OCI-LY7 (cell line): ENCODE measurements at regions of chr18 and their contacts with region 1.

Region 1: GRCh38 chr18:5029592-5029991 is 167.5 kb downstream of the AKAIN1 start:
- DNase-seq: no peak
- H3K4me3 ChIP-seq: no peak overlapping the region
- H3K27ac ChIP-seq: no peak overlapping the region
- H3K4me1 ChIP-seq: no peaks in the 10 kb centered on the region
- CTCF ChIP-seq: no peak

Region 2: DNA sequence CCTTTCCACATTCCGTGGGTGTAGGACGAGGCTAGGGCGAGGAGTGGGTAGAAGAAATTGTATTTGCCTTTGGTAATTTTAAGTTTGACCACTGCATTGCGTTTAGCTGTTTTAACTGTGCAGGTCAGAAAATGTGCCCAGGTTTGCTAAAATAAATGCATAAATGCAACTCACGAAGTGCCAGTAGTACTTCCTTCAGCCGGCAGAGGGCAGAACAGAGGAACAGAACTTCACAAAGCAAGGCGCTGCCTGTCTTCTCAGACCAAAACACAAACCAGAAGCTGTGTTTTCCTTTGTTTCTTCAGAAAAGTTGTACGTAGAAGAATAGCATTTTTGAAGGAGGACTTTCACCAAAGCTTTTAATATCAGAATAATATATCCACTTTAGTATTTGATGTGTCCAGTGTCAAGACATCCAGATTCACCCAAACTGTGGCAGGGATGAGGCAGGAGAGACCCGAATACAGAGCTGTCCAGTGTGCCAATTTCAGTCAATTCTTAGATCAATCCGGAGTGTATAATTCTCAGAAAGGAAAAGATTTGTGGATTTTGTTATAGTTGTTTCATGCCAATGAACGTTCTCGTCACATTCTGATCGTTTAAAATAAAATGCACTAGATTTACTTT is 923.1 kb before region 1 on chr18:
- CTCF ChIA-PET with region 1: no interaction called
- POLR2A ChIA-PET with region 1: no interaction called
- intact Hi-C with region 1: loop called (anchors 10 kb)
- DNase-seq: peak; percentile 70
- H3K4me3 ChIP-seq: no peak overlapping the region
- H3K27ac ChIP-seq: no peak overlapping the region
- H3K4me1 ChIP-seq: no peaks in the 10 kb centered on the region
- CTCF ChIP-seq: peak; percentile 97

Region 3: DNA sequence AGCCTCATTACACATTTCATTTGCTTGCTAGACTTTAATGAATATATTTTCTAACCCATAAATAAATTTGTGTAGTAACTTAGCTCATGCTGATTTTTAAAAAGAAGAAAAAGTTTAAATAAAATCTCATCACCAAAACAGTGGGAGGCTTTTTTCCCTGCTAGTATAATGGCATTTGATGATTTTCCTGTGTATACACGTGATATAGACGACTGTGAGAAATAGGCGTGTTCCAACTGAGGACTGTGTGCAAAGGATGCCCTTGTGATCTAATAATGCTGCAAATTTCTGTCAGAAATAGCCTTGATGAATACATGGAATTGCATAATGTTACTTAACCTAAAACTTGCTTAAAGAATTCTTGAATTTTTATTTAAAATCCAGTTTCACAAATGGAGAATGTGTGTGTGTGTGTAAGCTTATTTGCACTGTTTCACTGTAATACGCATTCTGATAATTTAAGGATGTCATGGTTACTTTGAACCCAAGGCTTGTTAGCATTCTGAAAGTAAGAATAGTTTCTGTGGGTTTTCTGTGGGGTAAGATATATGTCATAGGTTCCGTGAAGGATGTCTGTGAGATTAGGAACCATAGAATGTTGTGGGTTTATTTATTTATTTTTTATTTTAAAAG is 752.5 kb before region 1 on chr18:
- CTCF ChIA-PET with region 1: no interaction called
- POLR2A ChIA-PET with region 1: no interaction called
- intact Hi-C with region 1: loop called (anchors 10 kb)
- DNase-seq: no peak
- H3K4me3 ChIP-seq: no peak overlapping the region
- H3K27ac ChIP-seq: no peak overlapping the region
- H3K4me1 ChIP-seq: no peaks in the 10 kb centered on the region
- CTCF ChIP-seq: no peak

Region 4: DNA sequence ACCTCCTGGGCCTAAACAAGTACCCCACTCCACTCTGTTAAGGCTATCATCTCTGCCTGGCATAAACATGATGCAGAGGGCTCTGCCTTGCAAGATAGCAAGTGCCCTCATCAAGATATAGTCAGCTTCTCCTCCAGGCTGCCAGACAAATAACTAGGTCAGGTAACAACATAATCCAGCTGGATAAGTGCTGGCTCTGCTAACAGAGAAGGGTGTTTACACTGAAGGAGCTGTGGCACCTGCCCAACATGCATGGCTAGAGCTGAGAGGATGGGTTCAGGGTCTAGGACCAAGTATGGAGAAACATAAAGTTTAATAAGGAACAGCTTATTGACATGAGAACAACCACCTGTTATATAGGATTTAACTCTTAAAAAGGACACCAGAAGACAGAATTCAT is 617.3 kb before region 1 on chr18:
- CTCF ChIA-PET with region 1: no interaction called
- POLR2A ChIA-PET with region 1: no interaction called
- intact Hi-C with region 1: loop called (anchors 10 kb)
- DNase-seq: no peak
- H3K4me3 ChIP-seq: no peak overlapping the region
- H3K27ac ChIP-seq: no peak overlapping the region
- H3K4me1 ChIP-seq: no peaks in the 10 kb centered on the region
- CTCF ChIP-seq: no peak

Region 5: GRCh38 chr18:4524096-4524495 is 505.5 kb before region 1 on chr18:
- CTCF ChIA-PET with region 1: no interaction called
- POLR2A ChIA-PET with region 1: no interaction called
- intact Hi-C with region 1: loop called (anchors 10 kb)
- DNase-seq: no peak
- H3K4me3 ChIP-seq: no peak overlapping the region
- H3K27ac ChIP-seq: no peak overlapping the region
- H3K4me1 ChIP-seq: no peaks in the 10 kb centered on the region
- CTCF ChIP-seq: no peak